B cell (primary cell): ENCODE measurements at regions of chr6 and their contacts with region 1.

Region 1: GRCh38 chr6:155021680-155022079 is 26.6 kb downstream of the TIAM2 start:
- DNase-seq: no peak
- ATAC-seq: no peak
- H3K4me3 ChIP-seq: no peak overlapping the region
- H3K4me3 Mint-ChIP-seq: no peak overlapping the region
- H3K27ac ChIP-seq: no peak overlapping the region
- H3K27ac Mint-ChIP-seq: no peak overlapping the region
- H3K4me1 ChIP-seq: no peaks in the 10 kb centered on the region
- H3K4me1 Mint-ChIP-seq: no peaks in the 10 kb centered on the region
- H3K27me3 ChIP-seq: no peaks in the 10 kb centered on the region
- H3K27me3 Mint-ChIP-seq: no peaks in the 10 kb centered on the region
- CTCF ChIP-seq: no peak

Region 2: GRCh38 chr6:155045561-155046404 is 24.1 kb after region 1 on chr6:
- CTCF ChIA-PET with region 1: no interaction called
- POLR2A ChIA-PET with region 1: interaction called, 11 read pairs
- intact Hi-C with region 1: no loop called
- DNase-seq: no peak
- ATAC-seq: no peak
- H3K4me3 ChIP-seq: no peak overlapping the region
- H3K4me3 Mint-ChIP-seq: no peak overlapping the region
- H3K27ac ChIP-seq: no peak overlapping the region
- H3K27ac Mint-ChIP-seq: no peak overlapping the region
- H3K4me1 ChIP-seq: no peaks in the 10 kb centered on the region
- H3K4me1 Mint-ChIP-seq: no peaks in the 10 kb centered on the region
- H3K27me3 ChIP-seq: no peaks in the 10 kb centered on the region
- H3K27me3 Mint-ChIP-seq: peaks cover 3% of the 10 kb centered on the region
- CTCF ChIP-seq: no peak

Region 3: GRCh38 chr6:155212616-155213365 is 191.1 kb after region 1 on chr6:
- CTCF ChIA-PET with region 1: no interaction called
- POLR2A ChIA-PET with region 1: no interaction called
- intact Hi-C with region 1: no loop called
- DNase-seq: no peak
- ATAC-seq: no peak
- H3K4me3 ChIP-seq: no peak overlapping the region
- H3K4me3 Mint-ChIP-seq: no peak overlapping the region
- H3K27ac ChIP-seq: no peak overlapping the region
- H3K27ac Mint-ChIP-seq: no peak overlapping the region
- H3K4me1 ChIP-seq: no peaks in the 10 kb centered on the region
- H3K4me1 Mint-ChIP-seq: no peaks in the 10 kb centered on the region
- H3K27me3 ChIP-seq: no peaks in the 10 kb centered on the region
- H3K27me3 Mint-ChIP-seq: peaks cover 2% of the 10 kb centered on the region
- CTCF ChIP-seq: no peak